Dorsolateral prefrontal cortex (tissue), 120 donors: ENCODE measurements at regions of chr2 and their contacts with region 1.

Region 1: GRCh38 chr2:86298411-86299379 is 38.7 kb downstream of the REEP1 start:
- DNase-seq: peak in 6 of 10 donors; percentile 16 to 66 (median 46)
- H3K4me3 ChIP-seq: no peak overlapping the region
- H3K27ac ChIP-seq: peak overlapping the region in 58 of 59 donors; percentile 22 to 90 (median 75)
- H3K27me3 ChIP-seq: no peaks in the 10 kb centered on the region
- CTCF ChIP-seq: peak in 54 of 56 donors; percentile 29 to 77 (median 58)

Region 2: GRCh38 chr2:85468704-85469349 is 829.9 kb before region 1 on chr2:
- intact Hi-C with region 1: no loop called
- DNase-seq: peak in 1 of 10 donors; percentile 24
- H3K4me3 ChIP-seq: no peak overlapping the region
- H3K27ac ChIP-seq: peak overlapping the region in 2 of 59 donors; percentile 17 to 27
- H3K27me3 ChIP-seq: no peaks in the 10 kb centered on the region
- CTCF ChIP-seq: no peak

Region 3: GRCh38 chr2:86368161-86368824 is 69.6 kb after region 1 on chr2:
- intact Hi-C with region 1: loop called (anchors 2 to 5 kb)
- DNase-seq: peak in 3 of 10 donors; percentile 5 to 54 (median 24)
- H3K4me3 ChIP-seq: peak overlapping the region in 13 of 59 donors; percentile 0 to 38 (median 20)
- H3K27ac ChIP-seq: peak overlapping the region in 1 of 59 donors; percentile 36
- H3K27me3 ChIP-seq: no peaks in the 10 kb centered on the region
- CTCF ChIP-seq: peak in 55 of 56 donors; percentile 39 to 79 (median 65)